ENCODE measurements at regions of chr12 and their contacts with region 1.

Region 1: GRCh38 chr12:101021909-101022388 is 188.1 kb downstream of the SLC5A8 start:
- DNase-seq: peak; percentile 76
- H3K4me3 ChIP-seq: no peak overlapping the region
- H3K27ac ChIP-seq: peak overlapping the region; percentile 57
- H3K4me1 ChIP-seq: peaks cover 24% of the 10 kb centered on the region
- H3K27me3 ChIP-seq: no peaks in the 10 kb centered on the region
- CTCF ChIP-seq: no peak
- POLR2A ChIP-seq: no peak

Region 2: GRCh38 chr12:100970894-100971293 is 51.1 kb before region 1 on chr12:
- CTCF ChIA-PET with region 1: no interaction called
- POLR2A ChIA-PET with region 1: interaction called, 11 read pairs
- dilution Hi-C with region 1: no loop called
- intact Hi-C with region 1: no loop called
- DNase-seq: no peak
- H3K4me3 ChIP-seq: no peak overlapping the region
- H3K27ac ChIP-seq: no peak overlapping the region
- H3K4me1 ChIP-seq: no peaks in the 10 kb centered on the region
- H3K27me3 ChIP-seq: no peaks in the 10 kb centered on the region
- CTCF ChIP-seq: no peak
- POLR2A ChIP-seq: no peak

Region 3: DNA sequence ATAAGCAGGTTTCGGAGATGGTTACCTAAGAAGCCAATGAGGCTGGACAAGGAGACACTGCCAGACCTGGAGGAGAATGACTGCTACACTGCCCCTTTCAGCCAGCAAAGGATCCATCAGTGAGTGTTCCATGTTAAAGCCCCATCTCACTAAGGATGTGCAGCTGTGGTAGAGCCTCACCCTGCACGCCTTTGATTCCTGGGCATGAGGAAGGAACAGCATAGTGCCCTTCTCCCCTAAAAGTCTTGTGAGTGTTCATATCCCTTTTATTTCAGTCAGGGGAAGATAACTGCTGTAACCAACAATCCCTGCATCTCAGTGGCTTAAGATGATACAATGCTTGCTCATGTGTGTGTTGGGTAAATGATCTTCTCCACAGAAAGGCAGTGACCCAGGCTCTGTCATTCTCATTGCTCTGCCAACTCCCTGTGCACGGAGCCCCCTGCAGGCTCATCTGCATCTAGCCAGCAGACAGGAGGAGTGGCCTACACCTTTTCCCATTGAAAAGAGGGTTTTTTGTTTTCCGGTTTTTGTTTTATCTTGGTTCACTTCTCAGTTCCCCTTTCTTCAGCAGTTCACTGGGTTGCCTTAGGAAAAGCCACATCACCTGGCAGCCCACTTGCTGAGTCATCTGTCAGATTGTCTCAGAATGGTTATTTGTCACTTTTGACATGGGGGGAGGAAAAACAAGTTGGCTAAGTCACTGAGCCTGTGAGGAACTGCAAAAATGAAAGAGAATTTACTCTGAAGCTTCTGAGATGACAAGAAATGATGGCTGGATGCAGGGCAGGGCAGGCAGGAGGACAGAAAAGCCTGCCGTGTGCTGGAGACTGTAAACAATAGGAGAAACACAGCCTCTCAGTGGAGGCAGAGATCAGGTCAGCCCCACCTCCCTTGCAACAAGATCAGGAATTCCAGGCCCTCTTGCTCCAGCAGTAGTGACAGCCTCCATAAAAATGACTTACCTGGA is 34.1 kb before region 1 on chr12:
- CTCF ChIA-PET with region 1: no interaction called
- POLR2A ChIA-PET with region 1: no interaction called
- dilution Hi-C with region 1: no loop called
- intact Hi-C with region 1: loop called (anchors 1 kb)
- DNase-seq: peak; percentile 51
- H3K4me3 ChIP-seq: no peak overlapping the region
- H3K27ac ChIP-seq: no peak overlapping the region
- H3K4me1 ChIP-seq: no peaks in the 10 kb centered on the region
- H3K27me3 ChIP-seq: no peaks in the 10 kb centered on the region
- CTCF ChIP-seq: peak; percentile 18 to 28
- POLR2A ChIP-seq: no peak

Region 4: DNA sequence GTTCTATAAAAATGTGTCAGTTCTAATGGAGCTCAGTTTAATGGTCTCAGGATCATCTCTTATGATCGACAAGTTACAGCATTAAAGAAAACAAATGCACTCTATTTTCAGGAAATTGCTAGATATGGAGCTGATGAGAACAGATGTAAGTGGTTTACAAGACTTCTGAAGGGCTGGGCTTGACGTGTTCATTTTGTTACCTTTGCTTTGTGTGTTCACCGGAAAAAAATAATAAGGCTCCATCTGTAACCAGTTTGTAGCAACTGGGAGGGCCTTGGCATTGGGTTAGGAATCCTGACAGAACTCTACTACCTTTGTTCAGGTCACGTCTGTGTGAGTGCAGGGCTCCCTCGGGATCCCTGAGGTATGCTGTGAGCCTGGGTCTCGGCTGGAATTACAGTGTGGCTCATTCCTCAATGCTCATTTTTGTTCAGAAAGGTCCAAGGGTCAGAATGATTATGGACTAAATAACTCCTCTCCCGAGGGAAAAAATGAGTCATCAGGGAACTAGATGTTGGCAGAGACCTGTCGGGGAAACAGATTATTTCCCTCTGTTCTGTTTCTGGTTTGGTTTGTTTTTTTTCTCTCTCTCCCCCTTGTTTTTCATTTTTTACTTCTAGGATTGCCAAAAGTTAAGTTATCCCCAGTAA is 30.1 kb after region 1 on chr12:
- CTCF ChIA-PET with region 1: no interaction called
- POLR2A ChIA-PET with region 1: no interaction called
- dilution Hi-C with region 1: no loop called
- intact Hi-C with region 1: loop called (anchors 1 kb)
- DNase-seq: peak; percentile 82
- H3K4me3 ChIP-seq: no peak overlapping the region
- H3K27ac ChIP-seq: no peak overlapping the region
- H3K4me1 ChIP-seq: no peaks in the 10 kb centered on the region
- H3K27me3 ChIP-seq: no peaks in the 10 kb centered on the region
- CTCF ChIP-seq: no peak
- POLR2A ChIP-seq: no peak

Region 5: GRCh38 chr12:101407436-101408345 is 385.7 kb after region 1 on chr12 and contains the start of gene ARL1:
- CTCF ChIA-PET with region 1: no interaction called
- POLR2A ChIA-PET with region 1: no interaction called
- dilution Hi-C with region 1: no loop called
- intact Hi-C with region 1: loop called (anchors 5 kb)
- DNase-seq: peak; percentile 91
- H3K4me3 ChIP-seq: peak within 1 kb of the TSS; percentile 39 to 88 (median 71)
- H3K27ac ChIP-seq: peak within 1 kb of the TSS; percentile 99
- H3K4me1 ChIP-seq: peaks cover 13% of the 10 kb centered on the region
- H3K27me3 ChIP-seq: peaks cover 0 to 4% of the 10 kb centered on the region in 2 experiments
- CTCF ChIP-seq: no peak
- POLR2A ChIP-seq: peak; percentile 66
- total RNA-seq, gene ARL1: 65.4 and 76.5 TPM in 2 replicates

Measured in endothelial cell of umbilical vein (primary cell).